ENCODE measurements at regions of chr2 and their contacts with region 1.

Region 1: GRCh38 chr2:197198890-197199289 is 111.7 kb downstream of the ANKRD44 start:
- DNase-seq: peak; percentile 98
- ATAC-seq: peak; percentile 98
- H3K4me3 ChIP-seq: peak overlapping the region; percentile 53; the same call in 1 of the 2 replicates
- H3K27ac ChIP-seq: peak overlapping the region; percentile 87
- H3K4me1 ChIP-seq: peaks cover 36% of the 10 kb centered on the region
- H3K27me3 ChIP-seq: no peaks in the 10 kb centered on the region
- CTCF ChIP-seq: no peak
- EP300 ChIP-seq: peak; percentile 71 to 84
- POLR2A ChIP-seq: peak; percentile 87
- RAD21 ChIP-seq: no peak; the same call in 1 of the 2 replicates

Region 2: GRCh38 chr2:197209742-197210408 is 11.0 kb after region 1 on chr2:
- CTCF ChIA-PET with region 1: interaction called, 20 read pairs
- POLR2A ChIA-PET with region 1: interaction called, 41 read pairs
- RAD21 ChIA-PET with region 1: interaction called, 127 read pairs
- SMC1A ChIA-PET with region 1: interaction called, 70 read pairs
- in situ Hi-C with region 1: no loop called
- intact Hi-C with region 1: loop called (anchors 1 kb)
- DNase-seq: peak; percentile 76
- ATAC-seq: peak; percentile 47
- H3K4me3 ChIP-seq: peak overlapping the region; percentile 28
- H3K27ac ChIP-seq: peak overlapping the region; percentile 97
- H3K4me1 ChIP-seq: peaks cover 94% of the 10 kb centered on the region
- H3K27me3 ChIP-seq: no peaks in the 10 kb centered on the region
- CTCF ChIP-seq: no peak
- EP300 ChIP-seq: peak in 1 of 2 experiments; percentile 21; a peak in 2 of 4 replicates
- POLR2A ChIP-seq: no peak
- RAD21 ChIP-seq: no peak

Region 3: DNA sequence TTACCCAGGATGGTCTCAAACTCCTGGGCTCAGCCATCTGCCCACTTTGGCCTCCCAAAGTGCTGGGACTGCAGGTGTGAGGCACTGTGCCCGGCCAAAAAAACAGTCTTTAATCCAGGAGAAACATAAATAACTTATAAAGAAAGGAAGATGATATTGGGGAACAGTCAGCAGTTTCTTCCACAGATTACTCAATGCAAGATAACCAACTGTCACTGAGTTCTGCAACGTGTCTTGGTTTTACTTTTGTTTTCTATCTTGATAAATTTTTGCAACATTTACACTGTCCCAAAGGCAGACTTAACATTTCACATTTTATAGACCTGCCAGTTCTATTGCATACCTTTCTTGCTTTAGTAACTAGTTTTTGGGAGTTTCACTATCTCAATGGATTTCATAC is 40.5 kb after region 1 on chr2:
- CTCF ChIA-PET with region 1: interaction called, 3 read pairs
- POLR2A ChIA-PET with region 1: interaction called, 9 read pairs
- RAD21 ChIA-PET with region 1: interaction called, 30 read pairs
- SMC1A ChIA-PET with region 1: interaction called, 31 read pairs
- in situ Hi-C with region 1: no loop called
- intact Hi-C with region 1: loop called (anchors 2 kb)
- DNase-seq: no peak
- ATAC-seq: peak; percentile 82
- H3K4me3 ChIP-seq: peak overlapping the region; percentile 56
- H3K27ac ChIP-seq: peak overlapping the region; percentile 77
- H3K4me1 ChIP-seq: peaks cover 49% of the 10 kb centered on the region
- H3K27me3 ChIP-seq: no peaks in the 10 kb centered on the region
- CTCF ChIP-seq: no peak
- EP300 ChIP-seq: no peak
- POLR2A ChIP-seq: no peak
- RAD21 ChIP-seq: no peak

Region 4: DNA sequence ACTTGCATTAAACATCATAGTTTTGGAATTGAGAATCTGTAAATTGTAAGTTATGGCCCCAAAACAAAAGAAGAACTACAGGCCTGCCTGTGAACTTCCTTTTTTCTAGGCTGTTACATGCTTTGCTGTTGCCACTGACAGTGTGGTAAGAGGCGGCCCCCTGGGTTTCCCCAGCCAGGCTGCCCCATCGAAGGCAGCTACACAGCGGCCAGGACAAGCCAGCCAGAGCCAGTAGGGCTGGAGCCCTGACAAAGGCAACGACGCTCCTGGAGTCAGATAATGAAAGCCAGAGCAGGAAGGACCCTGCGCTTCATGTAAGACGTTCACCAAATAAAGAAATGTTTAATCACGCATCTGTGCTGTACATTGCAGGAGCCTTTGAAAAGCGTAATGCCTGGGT is 56.7 kb after region 1 on chr2:
- CTCF ChIA-PET with region 1: interaction called, 6 read pairs
- POLR2A ChIA-PET with region 1: interaction called, 5 read pairs
- RAD21 ChIA-PET with region 1: interaction called, 65 read pairs
- SMC1A ChIA-PET with region 1: interaction called, 61 read pairs
- in situ Hi-C with region 1: no loop called
- intact Hi-C with region 1: loop called (anchors 2 kb)
- DNase-seq: peak; percentile 81
- ATAC-seq: peak; percentile 94
- H3K4me3 ChIP-seq: peak overlapping the region; percentile 59
- H3K27ac ChIP-seq: peak overlapping the region; percentile 97
- H3K4me1 ChIP-seq: peaks cover 31% of the 10 kb centered on the region
- H3K27me3 ChIP-seq: no peaks in the 10 kb centered on the region
- CTCF ChIP-seq: no peak
- EP300 ChIP-seq: peak; percentile 57 to 66; a peak in 3 of 4 replicates
- POLR2A ChIP-seq: peak; percentile 98
- RAD21 ChIP-seq: peak; percentile 20; the same call in 1 of the 2 replicates

Region 5: DNA sequence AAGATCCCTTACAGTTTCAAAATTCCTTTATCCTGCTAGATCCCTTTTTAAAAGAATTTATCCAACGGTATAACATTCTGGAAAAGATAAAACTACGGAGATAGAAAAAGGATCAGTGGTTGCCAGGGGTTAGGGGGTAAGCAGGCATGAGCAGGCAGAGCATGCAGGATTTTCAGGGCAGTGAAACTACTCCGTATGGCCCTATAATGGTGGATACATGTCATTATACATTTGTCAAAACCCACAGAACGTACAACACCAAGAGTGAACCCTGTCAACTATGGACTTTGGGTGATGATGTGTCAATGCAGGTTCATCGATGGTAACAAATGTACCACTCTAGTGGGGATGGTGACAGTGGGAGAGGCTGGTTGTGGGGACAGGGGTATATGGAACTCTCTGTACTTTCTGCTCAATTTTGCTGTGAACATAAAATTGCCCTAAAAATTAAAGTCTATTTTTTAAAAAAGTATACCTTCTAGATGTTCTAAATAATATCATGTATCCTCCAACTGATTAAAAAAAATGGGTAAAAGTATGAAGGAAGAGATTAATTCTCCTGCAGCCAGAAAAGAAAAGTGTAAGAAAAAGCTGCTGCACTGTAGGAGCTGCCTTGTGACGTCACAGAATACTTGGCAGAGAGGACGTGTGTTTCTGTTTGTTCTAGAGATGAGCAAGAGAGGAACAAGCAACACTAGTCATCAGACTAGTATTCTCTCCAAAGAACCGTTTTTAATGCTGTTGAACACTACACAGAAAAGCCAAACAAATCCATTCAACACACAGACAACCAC is 88.1 kb after region 1 on chr2:
- CTCF ChIA-PET with region 1: interaction called, 4 read pairs
- POLR2A ChIA-PET with region 1: no interaction called
- RAD21 ChIA-PET with region 1: interaction called, 11 read pairs
- SMC1A ChIA-PET with region 1: interaction called, 433 read pairs
- in situ Hi-C with region 1: no loop called
- intact Hi-C with region 1: no loop called
- DNase-seq: no peak
- ATAC-seq: peak; percentile 95
- H3K4me3 ChIP-seq: no peak overlapping the region; the same call in 1 of the 2 replicates
- H3K27ac ChIP-seq: peak overlapping the region; percentile 71
- H3K4me1 ChIP-seq: peaks cover 26% of the 10 kb centered on the region
- H3K27me3 ChIP-seq: no peaks in the 10 kb centered on the region
- CTCF ChIP-seq: no peak
- EP300 ChIP-seq: no peak
- POLR2A ChIP-seq: no peak
- RAD21 ChIP-seq: no peak

Region 6: GRCh38 chr2:197304556-197305011 is 105.7 kb after region 1 on chr2:
- CTCF ChIA-PET with region 1: interaction called, 119 read pairs
- POLR2A ChIA-PET with region 1: interaction called, 43 read pairs
- RAD21 ChIA-PET with region 1: interaction called, 408 read pairs
- SMC1A ChIA-PET with region 1: interaction called, 433 read pairs
- in situ Hi-C with region 1: no loop called
- intact Hi-C with region 1: loop called (anchors 2 kb)
- DNase-seq: no peak
- ATAC-seq: peak; percentile 43
- H3K4me3 ChIP-seq: peak overlapping the region; percentile 67
- H3K27ac ChIP-seq: peak overlapping the region; percentile 99
- H3K4me1 ChIP-seq: peaks cover 62% of the 10 kb centered on the region
- H3K27me3 ChIP-seq: no peaks in the 10 kb centered on the region
- CTCF ChIP-seq: no peak
- EP300 ChIP-seq: no peak
- POLR2A ChIP-seq: peak; percentile 34; the same call in 1 of the 2 replicates
- RAD21 ChIP-seq: no peak

Measured in GM12878 (cell line).